ENCODE measurements at regions of chr1 and their contacts with region 1.

Region 1: GRCh38 chr1:117758444-117759316 is 152.8 kb downstream of the TENT5C start:
- DNase-seq: peak; percentile 77
- H3K4me3 Mint-ChIP-seq: peak overlapping the region; percentile 63
- H3K27ac Mint-ChIP-seq: no peak overlapping the region
- H3K4me1 Mint-ChIP-seq: peaks cover 12% of the 10 kb centered on the region
- H3K27me3 Mint-ChIP-seq: peaks cover 10% of the 10 kb centered on the region

Region 2: GRCh38 chr1:117312225-117313138 is 446.2 kb before region 1 on chr1:
- CTCF ChIA-PET with region 1: interaction called, 5 read pairs
- intact Hi-C with region 1: loop called (anchors 10 kb)
- DNase-seq: no peak
- H3K4me3 Mint-ChIP-seq: no peak overlapping the region
- H3K27ac Mint-ChIP-seq: no peak overlapping the region
- H3K4me1 Mint-ChIP-seq: no peaks in the 10 kb centered on the region
- H3K27me3 Mint-ChIP-seq: no peaks in the 10 kb centered on the region

Region 3: GRCh38 chr1:117512743-117513321 is 245.8 kb before region 1 on chr1:
- CTCF ChIA-PET with region 1: interaction called, 41 read pairs
- intact Hi-C with region 1: loop called (anchors 1 kb)
- DNase-seq: no peak
- H3K4me3 Mint-ChIP-seq: no peak overlapping the region
- H3K27ac Mint-ChIP-seq: no peak overlapping the region
- H3K4me1 Mint-ChIP-seq: peaks cover 2% of the 10 kb centered on the region
- H3K27me3 Mint-ChIP-seq: no peaks in the 10 kb centered on the region

Region 4: GRCh38 chr1:117612517-117613248 is 146.0 kb before region 1 on chr1:
- CTCF ChIA-PET with region 1: interaction called, 12 read pairs
- intact Hi-C with region 1: no loop called
- DNase-seq: no peak
- H3K4me3 Mint-ChIP-seq: no peak overlapping the region
- H3K27ac Mint-ChIP-seq: no peak overlapping the region
- H3K4me1 Mint-ChIP-seq: peaks cover 49% of the 10 kb centered on the region
- H3K27me3 Mint-ChIP-seq: peaks cover 8% of the 10 kb centered on the region

Region 5: GRCh38 chr1:117710710-117711109 is 48.0 kb before region 1 on chr1:
- CTCF ChIA-PET with region 1: interaction called, 16 read pairs
- intact Hi-C with region 1: loop called (anchors 2 kb)
- DNase-seq: no peak
- H3K4me3 Mint-ChIP-seq: no peak overlapping the region
- H3K27ac Mint-ChIP-seq: no peak overlapping the region
- H3K4me1 Mint-ChIP-seq: no peaks in the 10 kb centered on the region
- H3K27me3 Mint-ChIP-seq: peaks cover 5% of the 10 kb centered on the region

Region 6: GRCh38 chr1:117740496-117740895 is 18.2 kb before region 1 on chr1:
- CTCF ChIA-PET with region 1: interaction called, 13 read pairs
- intact Hi-C with region 1: no loop called
- DNase-seq: no peak
- H3K4me3 Mint-ChIP-seq: no peak overlapping the region
- H3K27ac Mint-ChIP-seq: no peak overlapping the region
- H3K4me1 Mint-ChIP-seq: peaks cover 2% of the 10 kb centered on the region
- H3K27me3 Mint-ChIP-seq: no peaks in the 10 kb centered on the region

Region 7: DNA sequence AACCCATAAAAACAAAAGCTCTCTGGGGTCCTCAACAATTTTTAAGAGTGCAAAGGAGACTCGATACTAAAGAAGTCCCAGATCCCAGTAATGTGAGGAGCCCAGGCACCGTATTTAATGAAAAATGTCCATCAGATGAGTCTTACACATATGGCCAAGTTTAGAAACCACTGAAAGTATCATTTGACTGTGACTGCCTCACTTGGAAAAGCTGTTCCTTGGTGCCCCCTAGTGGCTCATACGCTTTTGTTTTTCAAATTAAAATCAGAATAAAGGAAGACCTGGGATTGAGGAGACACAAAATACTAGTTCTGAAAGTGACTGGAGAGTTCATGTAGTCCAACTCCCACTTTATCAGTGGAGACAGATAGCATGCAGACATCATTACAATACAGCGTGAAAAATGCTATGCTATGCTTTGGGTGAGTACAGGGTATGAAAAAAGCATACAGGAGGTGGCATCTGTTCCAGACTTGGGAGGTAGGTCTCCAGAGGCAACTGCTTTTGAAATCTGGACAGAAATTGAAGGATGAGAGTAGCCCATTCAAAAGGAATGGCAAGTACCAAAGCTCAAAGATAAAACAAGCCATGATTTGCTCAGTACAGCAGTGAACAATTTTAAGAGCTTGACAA is 136.9 kb after region 1 on chr1:
- CTCF ChIA-PET with region 1: interaction called, 20 read pairs
- intact Hi-C with region 1: loop called (anchors 2 kb)
- DNase-seq: peak; percentile 80
- H3K4me3 Mint-ChIP-seq: no peak overlapping the region
- H3K27ac Mint-ChIP-seq: no peak overlapping the region
- H3K4me1 Mint-ChIP-seq: no peaks in the 10 kb centered on the region
- H3K27me3 Mint-ChIP-seq: no peaks in the 10 kb centered on the region

Measured in activated naive CD4-positive, alpha-beta T cell treated with anti-CD3 and anti-CD28 coated beads for 36 hours (primary cell).